K562 (cell line): ENCODE measurements at regions of chr20 and their contacts with region 1.

Region 1: DNA sequence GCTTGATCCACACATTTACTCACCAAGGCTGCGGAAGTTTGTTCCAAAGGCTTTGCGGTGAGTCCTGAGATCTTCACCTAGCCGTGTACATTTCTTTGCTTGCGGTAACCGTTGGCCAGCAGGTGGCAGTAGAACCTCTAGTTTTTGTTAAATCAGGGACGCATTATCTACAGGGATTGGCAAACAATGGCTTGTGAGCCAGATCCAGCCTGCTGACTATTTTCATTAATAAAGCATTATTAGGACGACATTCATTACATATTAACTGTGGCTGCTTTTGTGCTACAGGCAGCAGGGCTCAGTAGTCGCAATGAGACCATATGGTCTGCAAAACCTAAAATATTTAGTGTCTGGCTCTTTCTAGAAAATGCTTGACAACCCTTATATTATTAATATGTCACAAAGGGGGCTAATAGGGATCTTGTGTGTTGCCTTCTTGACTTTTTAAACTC is 174.1 kb downstream of the DOK5 start:
- DNase-seq: peak; percentile 53 to 78 (median 69)
- ATAC-seq: peak; percentile 86
- H3K4me3 ChIP-seq: no peak overlapping the region
- H3K27ac ChIP-seq: no peak overlapping the region
- H3K4me1 ChIP-seq: no peaks in the 10 kb centered on the region
- H3K27me3 ChIP-seq: no peaks in the 10 kb centered on the region
- CTCF ChIP-seq: peak; percentile 58 to 74 (median 72)
- EP300 ChIP-seq: no peak
- POLR2A ChIP-seq: no peak
- RAD21 ChIP-seq: peak; percentile 47 to 73

Region 2: DNA sequence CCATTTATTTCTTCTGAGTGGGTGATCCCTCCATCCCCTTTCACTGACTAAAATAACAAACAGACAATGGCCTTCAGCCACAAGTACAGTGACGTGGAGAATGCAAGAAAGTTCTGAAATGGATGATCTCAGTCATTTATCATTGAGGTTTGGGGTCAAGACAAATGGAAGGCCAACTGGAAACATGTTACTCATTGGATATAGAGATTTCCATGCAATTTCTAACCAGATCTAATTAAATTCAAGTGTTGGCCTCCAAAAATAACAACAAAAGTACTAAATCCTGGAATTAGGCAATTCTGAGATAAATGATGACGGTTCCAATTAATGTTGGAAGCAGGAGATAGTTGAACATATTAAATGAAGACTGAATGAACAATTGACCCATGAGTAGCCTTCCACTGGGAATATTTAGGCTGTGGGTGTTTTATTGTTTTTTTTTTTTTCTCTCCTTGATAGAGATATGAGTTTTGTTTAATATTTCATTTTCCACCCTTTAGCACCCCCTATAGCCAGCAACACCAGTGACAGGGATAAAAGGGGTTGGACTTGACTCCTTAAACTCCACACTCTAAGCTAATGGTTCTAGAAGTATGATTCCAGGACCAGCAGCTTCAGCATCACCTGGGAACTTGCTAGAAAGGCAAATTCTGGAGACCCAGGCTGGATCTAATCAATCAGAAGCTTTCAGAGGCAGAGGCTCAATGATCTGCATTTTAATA is 691.9 kb before region 1 on chr20:
- CTCF ChIA-PET with region 1: no interaction called
- POLR2A ChIA-PET with region 1: no interaction called
- in situ Hi-C with region 1: loop called (anchors 25 kb)
- intact Hi-C with region 1: no loop called
- DNase-seq: no peak
- ATAC-seq: peak; percentile 74
- H3K4me3 ChIP-seq: no peak overlapping the region
- H3K27ac ChIP-seq: no peak overlapping the region
- H3K4me1 ChIP-seq: no peaks in the 10 kb centered on the region
- H3K27me3 ChIP-seq: peaks cover 5 to 18% of the 10 kb centered on the region in 2 experiments; a peak in 3 of 5 replicates
- CTCF ChIP-seq: peak; percentile 7 to 38 (median 11); a peak in 3 of 6 replicates
- EP300 ChIP-seq: no peak
- POLR2A ChIP-seq: no peak
- RAD21 ChIP-seq: peak in 1 of 2 experiments; percentile 23; a peak in 1 of 4 replicates

Region 3: DNA sequence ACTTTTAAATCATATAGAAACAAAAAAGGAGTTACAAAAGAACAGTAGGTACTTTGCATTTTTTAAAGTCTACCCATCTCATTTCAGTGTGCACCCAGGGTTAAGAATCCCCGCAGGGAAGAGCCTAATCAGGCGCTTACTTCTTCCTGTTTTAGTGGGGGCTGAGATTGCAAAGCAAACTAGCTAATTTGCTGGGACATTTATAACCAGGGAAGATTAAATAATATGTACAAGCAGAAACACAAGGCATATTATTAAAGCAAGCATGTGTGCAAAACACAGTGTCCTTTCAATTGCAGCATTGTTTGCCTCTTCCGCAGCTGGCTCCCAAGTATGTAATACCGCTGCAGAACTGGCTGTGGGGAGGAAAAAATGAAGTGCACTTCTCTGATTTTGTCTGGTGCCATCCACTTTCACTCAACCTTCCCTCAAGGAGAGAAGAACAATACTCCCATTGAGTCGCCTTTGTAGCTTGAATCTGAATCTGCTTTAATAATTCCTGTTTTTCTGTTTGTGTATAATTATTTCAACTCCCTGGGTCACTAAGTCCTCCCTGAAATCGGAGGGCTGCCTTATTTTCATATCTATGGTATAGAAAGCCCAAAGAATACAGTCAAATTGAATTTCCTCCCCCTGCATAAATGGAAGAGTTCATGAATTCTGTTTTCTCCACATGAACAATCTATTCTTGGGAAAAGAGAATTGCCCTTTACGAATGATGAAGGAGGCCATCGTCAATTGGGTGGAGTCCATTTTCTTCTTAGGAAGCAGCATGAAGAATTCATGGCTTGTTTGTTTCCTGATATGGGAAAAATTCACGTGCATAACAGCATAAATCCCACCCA is 555.9 kb before region 1 on chr20:
- CTCF ChIA-PET with region 1: interaction called, 21 read pairs
- POLR2A ChIA-PET with region 1: no interaction called
- in situ Hi-C with region 1: loop called (anchors 10 kb)
- intact Hi-C with region 1: no loop called
- DNase-seq: no peak
- ATAC-seq: no peak
- H3K4me3 ChIP-seq: no peak overlapping the region
- H3K27ac ChIP-seq: no peak overlapping the region
- H3K4me1 ChIP-seq: no peaks in the 10 kb centered on the region
- H3K27me3 ChIP-seq: peaks cover 0 to 2% of the 10 kb centered on the region in 2 experiments; a peak in 2 of 5 replicates
- CTCF ChIP-seq: no peak
- EP300 ChIP-seq: no peak
- POLR2A ChIP-seq: no peak
- RAD21 ChIP-seq: no peak

Region 4: DNA sequence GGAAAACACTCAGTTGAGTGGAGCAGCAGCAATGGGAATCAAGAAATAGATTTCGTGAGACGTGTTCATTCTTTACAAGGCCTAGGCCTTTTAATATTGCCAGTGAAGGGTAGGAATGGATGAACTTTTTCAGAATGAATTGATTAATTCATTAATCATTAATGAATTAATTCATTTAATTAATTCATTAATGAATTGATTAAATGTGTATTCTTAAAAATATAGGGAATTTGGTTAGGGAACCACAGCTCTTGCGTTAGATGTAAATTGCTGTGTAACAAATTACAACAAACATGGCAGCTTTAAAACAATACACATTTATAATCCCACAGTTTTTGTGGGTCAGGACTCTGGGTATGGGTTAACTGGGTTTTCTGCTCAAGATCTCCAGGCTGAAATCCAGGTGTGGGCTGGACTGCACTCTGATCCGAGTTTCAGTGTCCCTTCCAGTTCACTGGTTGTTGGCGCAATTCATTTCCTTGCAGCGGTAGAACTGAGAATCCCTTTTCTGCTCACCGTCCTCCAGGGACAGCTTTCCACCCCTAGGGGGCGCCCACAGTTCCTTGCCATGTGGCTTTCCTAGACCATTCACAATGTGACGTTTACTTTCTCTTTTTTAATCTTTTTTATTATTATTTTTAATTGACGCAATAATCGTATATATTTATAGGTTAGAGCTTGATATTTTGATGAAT is 546.3 kb before region 1 on chr20:
- CTCF ChIA-PET with region 1: interaction called, 21 read pairs
- POLR2A ChIA-PET with region 1: no interaction called
- in situ Hi-C with region 1: loop called (anchors 10 kb)
- intact Hi-C with region 1: loop called (anchors 2 kb)
- DNase-seq: peak; percentile 69 to 78 (median 76)
- ATAC-seq: peak; percentile 98
- H3K4me3 ChIP-seq: no peak overlapping the region
- H3K27ac ChIP-seq: no peak overlapping the region
- H3K4me1 ChIP-seq: no peaks in the 10 kb centered on the region; a peak in 1 of 5 replicates
- H3K27me3 ChIP-seq: no peaks in the 10 kb centered on the region
- CTCF ChIP-seq: peak; percentile 83 to 87 (median 86)
- EP300 ChIP-seq: no peak
- POLR2A ChIP-seq: no peak
- RAD21 ChIP-seq: peak; percentile 42 to 51

Region 5: DNA sequence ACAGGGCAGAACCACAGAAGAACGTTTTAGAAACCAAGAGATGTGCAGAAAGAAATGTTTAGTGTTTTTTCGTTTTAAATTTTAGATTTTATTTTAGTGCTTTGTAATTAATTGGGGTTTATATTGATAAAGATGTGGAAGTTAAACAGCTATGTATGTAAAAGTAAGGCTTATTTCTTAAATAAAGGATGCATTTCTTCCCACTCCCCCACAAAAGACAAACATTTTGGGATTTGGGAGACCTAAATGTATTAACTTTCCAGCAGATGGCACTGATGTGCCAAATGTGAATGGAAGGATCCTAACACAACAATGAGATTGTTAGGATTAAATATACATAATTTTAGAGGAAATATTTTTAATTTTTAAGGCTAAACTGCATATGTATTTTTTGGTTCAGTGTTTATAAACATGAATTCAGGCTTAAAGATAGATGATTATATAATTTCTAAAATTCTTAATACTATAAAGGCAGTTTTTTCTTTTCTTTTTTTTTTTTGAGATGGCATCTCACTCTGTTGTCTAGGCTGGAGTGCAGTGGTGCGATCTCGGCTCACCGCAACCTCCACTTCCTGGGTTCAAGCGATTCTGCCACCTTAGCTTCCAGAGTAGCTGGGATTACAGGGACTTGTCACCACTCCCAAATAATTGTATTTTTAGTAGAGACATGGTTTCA is 429.6 kb before region 1 on chr20:
- CTCF ChIA-PET with region 1: interaction called, 19 read pairs
- POLR2A ChIA-PET with region 1: no interaction called
- in situ Hi-C with region 1: loop called (anchors 10 kb)
- intact Hi-C with region 1: loop called (anchors 5 kb)
- DNase-seq: peak in 1 of 4 experiments; percentile 41
- ATAC-seq: 0 out of 3 replicates have a peak, but pooled peaks have one; percentile 55
- H3K4me3 ChIP-seq: no peak overlapping the region
- H3K27ac ChIP-seq: no peak overlapping the region
- H3K4me1 ChIP-seq: no peaks in the 10 kb centered on the region
- H3K27me3 ChIP-seq: no peaks in the 10 kb centered on the region
- CTCF ChIP-seq: peak; percentile 30 to 51 (median 45); a peak in 4 of 6 replicates
- EP300 ChIP-seq: no peak
- POLR2A ChIP-seq: no peak
- RAD21 ChIP-seq: peak; percentile 33 to 60; a peak in 3 of 4 replicates

Region 6: GRCh38 chr20:56247948-56248782 is 1598.6 kb after region 1 on chr20 and contains the start of gene MC3R:
- CTCF ChIA-PET with region 1: interaction called, 13 read pairs
- POLR2A ChIA-PET with region 1: no interaction called
- in situ Hi-C with region 1: loop called (anchors 25 kb)
- intact Hi-C with region 1: loop called (anchors 2 kb)
- DNase-seq: peak; percentile 42 to 61 (median 47)
- ATAC-seq: peak; percentile 94
- H3K4me3 ChIP-seq: no peak within 1 kb of the TSS
- H3K27ac ChIP-seq: no peak within 1 kb of the TSS
- H3K4me1 ChIP-seq: no peaks in the 10 kb centered on the region; a peak in 1 of 5 replicates
- H3K27me3 ChIP-seq: peaks cover 0 to 7% of the 10 kb centered on the region in 2 experiments; a peak in 2 of 5 replicates
- CTCF ChIP-seq: peak; percentile 64 to 79 (median 64)
- EP300 ChIP-seq: no peak
- POLR2A ChIP-seq: no peak
- RAD21 ChIP-seq: peak in 1 of 2 experiments; percentile 60; a peak in 2 of 4 replicates
- polyA plus RNA-seq, gene MC3R: not detected